Heart left ventricle (tissue), 16 donors: ENCODE measurements at regions of chr16 and their contacts with region 1.

Region 1: GRCh38 chr16:15765880-15766279 is 90.9 kb downstream of the MYH11 start:
- DNase-seq: peak in 3 of 5 donors; percentile 25 to 34 (median 30)
- ATAC-seq: peak; percentile 37 to 87 (median 78)
- H3K4me3 ChIP-seq: no peak overlapping the region
- H3K27ac ChIP-seq: peak overlapping the region in 1 of 12 donors; percentile 52
- H3K4me1 ChIP-seq: peaks cover 0 to 15% (median 4%) of the 10 kb centered on the region in 12 donors
- H3K27me3 ChIP-seq: peaks cover 0 to 7% (median 0%) of the 10 kb centered on the region in 9 donors
- CTCF ChIP-seq: peak; percentile 44 to 82 (median 68)
- POLR2A ChIP-seq: no peak

Region 2: DNA sequence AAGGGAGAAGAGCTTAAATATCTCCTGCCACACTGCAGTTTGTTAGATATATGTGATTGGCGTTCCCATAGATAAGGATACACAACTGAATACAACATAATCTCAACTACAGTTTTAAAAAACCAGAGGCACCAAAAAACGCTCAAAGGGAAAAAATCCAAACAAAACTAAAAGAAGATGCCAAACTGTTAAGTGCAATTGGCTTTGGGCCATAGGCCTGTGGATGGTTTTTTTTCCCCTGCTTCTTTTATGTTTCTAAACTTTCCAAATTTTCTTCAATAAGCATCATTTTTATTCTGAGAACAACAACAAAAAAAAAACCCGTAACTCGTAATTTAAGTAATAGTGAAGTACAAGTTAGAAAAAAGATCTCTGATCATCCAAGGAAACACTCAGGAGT is 145.1 kb before region 1 on chr16:
- intact Hi-C with region 1: no loop called
- DNase-seq: no peak
- ATAC-seq: no peak
- H3K4me3 ChIP-seq: no peak overlapping the region
- H3K27ac ChIP-seq: peak overlapping the region in 11 of 12 donors; percentile 2 to 80 (median 58)
- H3K4me1 ChIP-seq: peaks cover 0 to 21% (median 13%) of the 10 kb centered on the region in 12 donors
- H3K27me3 ChIP-seq: no peaks in the 10 kb centered on the region
- CTCF ChIP-seq: no peak
- POLR2A ChIP-seq: no peak

Region 3: GRCh38 chr16:15726715-15727114 is 39.2 kb before region 1 on chr16:
- intact Hi-C with region 1: no loop called
- DNase-seq: no peak
- ATAC-seq: no peak
- H3K4me3 ChIP-seq: no peak overlapping the region
- H3K27ac ChIP-seq: peak overlapping the region in 1 of 12 donors; percentile 53
- H3K4me1 ChIP-seq: no peaks in the 10 kb centered on the region
- H3K27me3 ChIP-seq: no peaks in the 10 kb centered on the region
- CTCF ChIP-seq: no peak
- POLR2A ChIP-seq: no peak

Region 4: GRCh38 chr16:15811481-15812400 is 45.9 kb after region 1 on chr16:
- intact Hi-C with region 1: no loop called
- DNase-seq: peak in 2 of 5 donors; percentile 22 to 35
- ATAC-seq: peak; percentile 56 to 93 (median 76)
- H3K4me3 ChIP-seq: no peak overlapping the region
- H3K27ac ChIP-seq: peak overlapping the region in 10 of 12 donors; percentile 1 to 84 (median 50)
- H3K4me1 ChIP-seq: peaks cover 0 to 31% (median 10%) of the 10 kb centered on the region in 12 donors
- H3K27me3 ChIP-seq: peaks cover 0 to 16% (median 5%) of the 10 kb centered on the region in 9 donors
- CTCF ChIP-seq: no peak
- POLR2A ChIP-seq: no peak

Region 5: DNA sequence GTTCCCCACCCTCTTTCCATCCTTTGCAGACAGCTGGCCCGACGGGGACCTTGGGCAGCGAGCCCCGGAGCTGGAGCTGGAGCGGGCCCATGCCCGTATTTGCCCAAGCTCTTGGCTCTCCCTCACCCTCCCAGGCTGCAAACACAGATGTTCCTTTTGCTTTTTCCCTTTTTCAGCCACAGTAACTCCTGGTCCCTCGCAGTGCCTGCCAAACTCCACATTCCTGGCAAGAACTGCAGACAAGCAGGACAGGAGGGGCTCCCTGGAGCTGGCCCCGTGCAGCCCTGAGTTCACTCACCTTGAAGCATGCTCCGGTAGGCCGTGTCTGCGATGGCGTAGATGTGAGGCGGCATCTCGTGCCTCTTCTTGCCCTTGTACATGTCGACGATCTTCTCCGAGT is 57.1 kb after region 1 on chr16:
- intact Hi-C with region 1: loop called in 9 of 10 experiments (anchors 1 to 10 kb)
- DNase-seq: no peak
- ATAC-seq: no peak
- H3K4me3 ChIP-seq: no peak overlapping the region
- H3K27ac ChIP-seq: peak overlapping the region in 1 of 12 donors; percentile 87
- H3K4me1 ChIP-seq: no peaks in the 10 kb centered on the region
- H3K27me3 ChIP-seq: no peaks in the 10 kb centered on the region
- CTCF ChIP-seq: no peak
- POLR2A ChIP-seq: no peak

Region 6: GRCh38 chr16:15829460-15829859 is 63.6 kb after region 1 on chr16:
- intact Hi-C with region 1: loop called in 4 of 10 experiments (anchors 5 to 10 kb)
- DNase-seq: peak; percentile 42 to 65 (median 47)
- ATAC-seq: peak in 3 of 4 donors; percentile 59 to 87 (median 67)
- H3K4me3 ChIP-seq: no peak overlapping the region
- H3K27ac ChIP-seq: peak overlapping the region in 1 of 12 donors; percentile 87
- H3K4me1 ChIP-seq: peaks cover 0 to 8% (median 0%) of the 10 kb centered on the region in 12 donors
- H3K27me3 ChIP-seq: no peaks in the 10 kb centered on the region
- CTCF ChIP-seq: peak in 1 of 12 donors; percentile 12
- POLR2A ChIP-seq: no peak

Region 7: GRCh38 chr16:16197847-16198365 is 432.0 kb after region 1 on chr16:
- intact Hi-C with region 1: loop called in 8 of 10 experiments (anchors 2 to 10 kb)
- DNase-seq: no peak
- ATAC-seq: no peak
- H3K4me3 ChIP-seq: no peak overlapping the region
- H3K27ac ChIP-seq: no peak overlapping the region
- H3K4me1 ChIP-seq: no peaks in the 10 kb centered on the region
- H3K27me3 ChIP-seq: no peaks in the 10 kb centered on the region
- CTCF ChIP-seq: no peak
- POLR2A ChIP-seq: no peak

Region 8: GRCh38 chr16:17194190-17194780 is 1428.4 kb after region 1 on chr16:
- intact Hi-C with region 1: no loop called
- DNase-seq: peak; percentile 21 to 68 (median 46)
- ATAC-seq: peak; percentile 49 to 62 (median 50)
- H3K4me3 ChIP-seq: no peak overlapping the region
- H3K27ac ChIP-seq: no peak overlapping the region
- H3K4me1 ChIP-seq: no peaks in the 10 kb centered on the region
- H3K27me3 ChIP-seq: no peaks in the 10 kb centered on the region
- CTCF ChIP-seq: peak; percentile 37 to 74 (median 62)
- POLR2A ChIP-seq: no peak